ENCODE measurements at regions of chr10 and their contacts with region 1.

Region 1: GRCh38 chr10:63157845-63158624 is 24.9 kb downstream of the NRBF2 start:
- DNase-seq: no peak
- ATAC-seq: peak; percentile 74 to 78

Region 2: DNA sequence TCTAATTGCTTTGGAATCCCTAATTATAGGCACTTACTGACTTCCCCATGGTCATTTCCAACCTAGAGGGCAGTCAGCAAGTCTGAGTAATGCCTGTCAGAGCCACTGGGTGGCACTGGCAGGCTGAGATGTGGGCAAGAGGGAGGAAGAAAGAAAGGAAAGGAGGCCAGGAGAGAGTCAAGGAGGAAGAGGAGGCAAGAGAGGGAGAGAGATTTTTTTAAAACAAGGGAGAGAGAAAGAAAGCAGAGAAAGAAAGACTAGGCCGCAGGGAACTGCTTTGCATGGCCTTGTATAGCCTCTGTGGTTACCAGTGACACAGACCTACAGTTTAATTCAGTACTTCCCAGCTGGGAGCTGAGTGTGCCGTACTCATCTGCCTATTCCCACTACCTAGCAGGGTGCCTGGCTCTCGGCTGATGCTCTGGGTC is 563.9 kb before region 1 on chr10:
- intact Hi-C with region 1: loop called (anchors 5 kb)
- DNase-seq: peak; percentile 39
- ATAC-seq: peak; percentile 87 to 94

Measured in left cardiac atrium (tissue), 4 donors.